Activated CD4-positive, alpha-beta T cell treated with anti-CD3 and anti-CD28 coated beads, Interleukin-2, amount 10 ng/mL, durations not matched to agents 24 days and 14 days (primary cell): ENCODE measurements at regions of chr7 and their contacts with region 1.

Region 1: DNA sequence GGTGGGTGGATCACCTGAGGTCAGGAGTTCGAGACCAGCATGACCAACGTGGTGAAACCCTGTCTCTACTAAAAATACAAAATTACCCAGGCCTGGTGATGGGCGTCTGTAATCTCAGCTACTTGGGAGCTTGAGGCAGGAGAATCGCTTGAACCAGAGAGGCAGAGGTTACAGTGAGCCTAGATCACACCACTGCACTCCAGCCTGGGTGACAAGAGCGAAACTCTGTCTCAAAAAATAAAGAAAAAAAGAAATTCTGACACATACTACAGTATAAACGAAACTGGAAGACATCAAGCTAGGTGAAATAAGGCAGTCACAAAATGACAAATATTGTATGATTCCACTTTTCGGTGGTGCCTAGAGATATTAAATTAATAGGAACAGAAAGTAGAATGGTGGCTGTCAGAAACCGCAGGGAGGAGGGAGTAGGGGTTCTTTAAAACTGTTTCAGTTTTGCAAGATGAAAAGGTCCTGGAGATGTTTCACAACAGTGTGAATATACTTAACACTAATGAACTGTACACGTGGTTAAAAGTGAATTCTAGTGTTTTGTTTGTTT is 23.2 kb downstream of the PILRA start:
- DNase-seq: peak; percentile 87
- H3K4me3 Mint-ChIP-seq: peak overlapping the region; percentile 33
- H3K27ac Mint-ChIP-seq: peak overlapping the region; percentile 78
- H3K4me1 Mint-ChIP-seq: peaks cover 19% of the 10 kb centered on the region
- H3K27me3 Mint-ChIP-seq: peaks cover 59% of the 10 kb centered on the region

Region 2: GRCh38 chr7:100342765-100343164 is 53.7 kb before region 1 on chr7:
- intact Hi-C with region 1: loop called (anchors 10 kb)
- DNase-seq: no peak
- H3K4me3 Mint-ChIP-seq: no peak overlapping the region
- H3K27ac Mint-ChIP-seq: no peak overlapping the region
- H3K4me1 Mint-ChIP-seq: peaks cover 30% of the 10 kb centered on the region
- H3K27me3 Mint-ChIP-seq: peaks cover 2% of the 10 kb centered on the region

Region 3: GRCh38 chr7:100360135-100360854 is 36.2 kb before region 1 on chr7:
- intact Hi-C with region 1: loop called (anchors 5 kb)
- DNase-seq: no peak
- H3K4me3 Mint-ChIP-seq: no peak overlapping the region
- H3K27ac Mint-ChIP-seq: no peak overlapping the region
- H3K4me1 Mint-ChIP-seq: peaks cover 11% of the 10 kb centered on the region
- H3K27me3 Mint-ChIP-seq: no peaks in the 10 kb centered on the region

Region 4: GRCh38 chr7:100407285-100408180 is 11.0 kb after region 1 on chr7:
- intact Hi-C with region 1: loop called (anchors 2 kb)
- DNase-seq: peak; percentile 85
- H3K4me3 Mint-ChIP-seq: no peak overlapping the region
- H3K27ac Mint-ChIP-seq: no peak overlapping the region
- H3K4me1 Mint-ChIP-seq: no peaks in the 10 kb centered on the region
- H3K27me3 Mint-ChIP-seq: peaks cover 25% of the 10 kb centered on the region

Region 5: DNA sequence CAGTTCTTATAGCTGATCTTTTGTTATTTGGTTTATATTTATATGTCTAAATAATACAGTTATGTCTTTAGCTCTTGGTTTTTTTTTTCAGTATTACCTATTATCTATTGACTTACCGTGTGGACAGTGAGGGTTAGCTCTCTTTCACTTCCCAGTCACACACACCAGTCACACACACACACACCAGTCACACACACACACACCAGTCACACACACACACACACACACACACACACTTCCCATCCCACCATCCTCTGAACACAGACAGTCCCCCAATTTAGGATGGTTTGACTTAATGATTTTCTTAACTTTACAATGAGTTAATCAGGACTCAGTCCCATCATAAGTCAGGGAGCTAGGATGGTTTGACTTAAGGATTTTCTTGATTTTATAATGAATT is 123.6 kb after region 1 on chr7:
- intact Hi-C with region 1: no loop called
- DNase-seq: no peak
- H3K4me3 Mint-ChIP-seq: no peak overlapping the region
- H3K27ac Mint-ChIP-seq: no peak overlapping the region
- H3K4me1 Mint-ChIP-seq: peaks cover 16% of the 10 kb centered on the region
- H3K27me3 Mint-ChIP-seq: no peaks in the 10 kb centered on the region